ENCODE measurements at regions of chr1 and their contacts with region 1.

Region 1: DNA sequence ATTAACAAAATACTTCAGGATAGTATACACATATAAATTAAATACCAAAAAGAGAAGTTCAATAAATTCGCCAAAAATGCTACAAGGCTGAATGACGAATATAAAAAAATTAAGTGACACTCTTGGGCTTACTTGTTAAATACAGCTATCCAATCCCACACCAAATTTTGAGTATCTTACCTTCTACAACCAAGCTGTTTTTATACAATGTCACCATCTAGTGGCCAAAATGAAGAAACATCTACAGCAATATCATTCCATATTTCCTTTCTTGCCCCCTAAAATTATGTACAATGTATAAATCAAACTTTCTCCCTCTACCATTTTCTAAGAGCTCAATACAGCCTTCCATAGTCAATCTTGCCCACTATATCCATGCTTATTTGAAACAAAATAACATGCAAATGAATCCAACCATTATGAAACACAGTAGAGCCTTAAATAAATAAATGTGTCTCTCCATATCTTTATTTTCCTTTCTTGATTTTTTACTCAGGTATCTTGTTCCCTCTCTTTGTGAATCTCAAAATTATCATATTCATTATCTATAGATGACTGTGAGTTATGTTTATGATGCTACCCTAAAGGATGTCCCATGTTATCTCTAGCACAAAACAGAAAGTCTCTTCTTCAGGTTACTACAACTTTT is 86.3 kb downstream of the ACBD6 start:
- DNase-seq: no peak
- ATAC-seq: peak in 1 of 2 donors; percentile 34

Region 2: GRCh38 chr1:180194546-180195207 is 221.4 kb before region 1 on chr1:
- intact Hi-C with region 1: loop called in 1 of 2 experiments (anchors 5 kb)
- DNase-seq: no peak
- ATAC-seq: no peak

Region 3: GRCh38 chr1:180252638-180253536 is 163.2 kb before region 1 on chr1:
- intact Hi-C with region 1: loop called in 1 of 2 experiments (anchors 5 kb)
- DNase-seq: peak; percentile 69
- ATAC-seq: peak; percentile 54 to 56